OCI-LY7 (cell line): ENCODE measurements at regions of chr15 and their contacts with region 1.

Region 1: DNA sequence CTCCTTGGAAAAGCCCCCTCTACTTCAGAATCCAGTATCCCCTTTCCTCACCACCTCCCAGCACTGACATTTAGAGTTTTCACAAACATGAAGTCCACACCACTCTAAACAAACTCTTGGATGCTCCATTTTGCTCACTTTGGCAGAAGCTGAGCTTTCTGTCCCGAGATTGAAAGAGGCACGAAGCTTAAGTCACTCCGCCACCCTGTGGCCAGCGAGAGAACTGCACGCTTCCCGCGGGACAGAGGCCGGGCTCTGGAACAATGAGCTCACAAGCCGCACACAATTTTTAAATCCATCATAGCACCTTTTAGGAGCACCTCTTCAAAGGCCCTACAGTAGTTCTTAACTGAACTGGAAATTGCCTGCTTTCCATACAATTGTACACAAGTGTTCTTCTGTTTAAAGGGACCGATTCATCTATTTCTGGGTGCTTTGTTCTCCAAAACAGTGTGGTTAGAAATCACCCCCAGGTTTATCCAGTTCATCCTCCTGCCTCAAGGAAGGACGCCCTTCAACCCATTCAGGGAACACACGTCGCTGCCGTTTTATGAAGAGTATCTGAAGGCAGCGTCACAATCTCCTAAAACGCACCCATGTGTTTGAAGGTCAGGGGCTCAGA is 226.1 kb downstream of the VPS13C start:
- DNase-seq: peak; percentile 71
- H3K4me3 ChIP-seq: no peak overlapping the region
- H3K27ac ChIP-seq: no peak overlapping the region
- H3K4me1 ChIP-seq: no peaks in the 10 kb centered on the region
- CTCF ChIP-seq: peak; percentile 96

Region 2: DNA sequence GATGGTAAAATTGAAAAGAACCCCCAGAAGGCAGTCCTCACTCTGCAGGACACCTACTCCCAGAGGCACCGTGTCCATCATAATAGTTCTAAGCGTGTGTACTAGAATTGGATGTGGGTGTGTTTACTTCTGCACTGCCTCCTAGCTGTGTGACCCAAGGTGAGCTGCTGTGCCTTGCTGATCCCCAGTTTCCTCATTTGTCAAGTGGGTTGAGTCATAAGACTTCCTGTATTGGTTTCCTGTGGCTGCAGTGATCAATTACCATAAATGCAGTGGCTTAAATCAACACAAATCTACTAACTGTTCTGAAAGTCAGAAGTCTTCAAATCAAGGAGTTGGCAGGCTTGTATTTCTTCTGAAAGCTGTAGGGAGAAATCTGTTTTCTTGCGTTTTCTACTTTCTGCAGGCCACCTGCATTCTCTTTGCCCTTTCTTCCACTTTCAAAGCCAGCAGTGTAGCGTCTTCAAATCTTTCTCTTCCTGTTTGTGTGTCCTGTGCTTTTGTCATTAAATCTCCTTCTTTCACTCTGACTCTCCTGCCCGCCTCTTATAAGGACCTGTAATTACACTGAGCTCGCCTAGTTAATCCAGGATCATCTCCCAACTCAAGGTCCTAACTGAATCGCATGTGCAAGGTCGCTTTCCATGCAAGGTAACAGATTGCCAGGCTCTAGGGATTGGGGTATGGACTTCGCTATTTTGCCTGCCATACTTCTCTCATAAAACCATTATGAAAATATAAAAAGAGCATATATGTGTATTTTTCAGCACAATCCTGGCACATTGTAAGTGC is 664.1 kb before region 1 on chr15:
- CTCF ChIA-PET with region 1: no interaction called
- POLR2A ChIA-PET with region 1: no interaction called
- intact Hi-C with region 1: loop called (anchors 5 kb)
- DNase-seq: peak; percentile 44
- H3K4me3 ChIP-seq: peak overlapping the region; percentile 7
- H3K27ac ChIP-seq: peak overlapping the region; percentile 36
- H3K4me1 ChIP-seq: peaks cover 31% of the 10 kb centered on the region
- CTCF ChIP-seq: peak; percentile 41; the same call in 1 of the 2 replicates

Region 3: GRCh38 chr15:61527836-61528580 is 306.2 kb before region 1 on chr15:
- CTCF ChIA-PET with region 1: no interaction called
- POLR2A ChIA-PET with region 1: no interaction called
- intact Hi-C with region 1: loop called (anchors 10 kb)
- DNase-seq: no peak
- H3K4me3 ChIP-seq: no peak overlapping the region
- H3K27ac ChIP-seq: no peak overlapping the region
- H3K4me1 ChIP-seq: no peaks in the 10 kb centered on the region
- CTCF ChIP-seq: no peak

Region 4: DNA sequence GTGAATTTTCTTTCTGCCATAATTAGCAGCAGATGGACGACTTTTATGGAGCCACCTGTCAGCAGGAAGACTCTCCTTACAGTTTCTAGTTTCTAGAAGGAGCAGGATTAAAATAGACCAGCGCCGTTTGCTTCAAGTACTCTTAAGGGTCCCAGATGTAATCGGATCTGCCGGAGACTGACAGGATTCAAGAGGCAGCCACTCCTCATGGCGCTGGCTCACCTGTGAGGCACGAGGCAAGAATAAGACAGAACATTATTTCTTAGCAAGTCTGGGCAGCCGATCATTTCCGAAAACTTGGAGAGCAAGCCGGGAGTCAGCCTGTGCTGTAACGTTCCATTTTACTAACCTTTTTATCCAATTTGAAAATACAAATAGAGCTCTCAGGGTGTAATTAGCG is 194.7 kb before region 1 on chr15:
- CTCF ChIA-PET with region 1: no interaction called
- POLR2A ChIA-PET with region 1: no interaction called
- intact Hi-C with region 1: loop called (anchors 10 kb)
- DNase-seq: no peak
- H3K4me3 ChIP-seq: no peak overlapping the region
- H3K27ac ChIP-seq: no peak overlapping the region
- H3K4me1 ChIP-seq: no peaks in the 10 kb centered on the region
- CTCF ChIP-seq: no peak